ENCODE measurements at regions of chr20 and their contacts with region 1.

Region 1: GRCh38 chr20:56257604-56258003 is 9.1 kb downstream of the MC3R start:
- DNase-seq: no peak
- H3K4me3 ChIP-seq: no peak overlapping the region
- H3K27ac ChIP-seq: no peak overlapping the region
- H3K4me1 ChIP-seq: no peaks in the 10 kb centered on the region
- H3K27me3 ChIP-seq: peaks cover 37% of the 10 kb centered on the region
- CTCF ChIP-seq: no peak

Region 2: GRCh38 chr20:55415567-55416142 is 841.9 kb before region 1 on chr20:
- CTCF ChIA-PET with region 1: no interaction called
- POLR2A ChIA-PET with region 1: no interaction called
- intact Hi-C with region 1: loop called (anchors 10 kb)
- DNase-seq: peak; percentile 22
- H3K4me3 ChIP-seq: no peak overlapping the region
- H3K27ac ChIP-seq: no peak overlapping the region
- H3K4me1 ChIP-seq: no peaks in the 10 kb centered on the region
- H3K27me3 ChIP-seq: no peaks in the 10 kb centered on the region
- CTCF ChIP-seq: peak; percentile 39

Measured in A673 (cell line).